ENCODE measurements at regions of chr1 and their contacts with region 1.

Region 1: DNA sequence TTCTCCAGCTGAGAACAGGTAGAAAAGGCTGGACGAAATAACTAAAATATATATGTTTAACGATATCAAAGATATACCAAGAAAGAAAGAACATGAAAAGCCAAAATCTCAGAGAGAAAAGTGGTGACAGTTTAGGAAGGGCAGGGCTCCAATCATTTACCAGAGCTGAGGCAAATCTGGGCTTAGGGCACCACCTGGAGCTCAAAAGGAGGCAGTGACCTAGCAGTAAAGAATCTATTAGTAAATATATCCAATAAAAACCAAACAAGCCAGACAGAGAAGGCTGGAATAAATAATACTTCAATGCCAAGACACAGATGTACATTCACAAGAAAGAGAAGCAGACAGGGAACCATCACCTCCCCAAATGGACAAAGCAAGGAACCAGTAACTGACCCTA is 43.5 kb downstream of the CHIA start:
- DNase-seq: peak; percentile 59
- H3K4me3 Mint-ChIP-seq: no peak overlapping the region
- H3K27ac Mint-ChIP-seq: no peak overlapping the region
- H3K4me1 Mint-ChIP-seq: no peaks in the 10 kb centered on the region
- H3K27me3 Mint-ChIP-seq: no peaks in the 10 kb centered on the region
- CTCF ChIP-seq: peak; percentile 68

Region 2: DNA sequence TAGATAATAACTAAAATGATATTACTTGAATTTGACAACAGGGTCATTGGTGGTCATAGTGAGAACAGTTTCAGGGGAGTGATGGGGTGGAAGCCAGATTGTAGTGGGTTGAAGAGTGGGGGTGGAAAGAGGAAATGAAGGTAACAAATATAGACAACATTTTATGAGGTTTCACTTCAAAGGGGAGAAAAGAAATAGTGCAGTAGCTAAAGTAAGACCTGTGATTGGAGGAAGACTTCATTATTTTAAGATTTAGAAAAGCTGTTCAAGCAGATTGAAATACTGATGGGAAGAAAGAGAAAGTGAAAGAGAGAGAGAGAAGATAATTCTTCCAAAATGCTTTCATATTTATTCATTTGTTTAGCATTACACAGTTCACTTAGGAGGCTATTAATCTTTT is 607.4 kb before region 1 on chr1:
- CTCF ChIA-PET with region 1: no interaction called
- POLR2A ChIA-PET with region 1: no interaction called
- intact Hi-C with region 1: no loop called
- DNase-seq: no peak
- H3K4me3 Mint-ChIP-seq: no peak overlapping the region
- H3K27ac Mint-ChIP-seq: no peak overlapping the region
- H3K4me1 Mint-ChIP-seq: no peaks in the 10 kb centered on the region
- H3K27me3 Mint-ChIP-seq: peaks cover 45% of the 10 kb centered on the region
- CTCF ChIP-seq: no peak

Region 3: GRCh38 chr1:110963691-110964399 is 370.3 kb before region 1 on chr1 and contains the start of gene LRIF1:
- CTCF ChIA-PET with region 1: no interaction called
- POLR2A ChIA-PET with region 1: no interaction called
- intact Hi-C with region 1: no loop called
- DNase-seq: peak; percentile 51
- H3K4me3 Mint-ChIP-seq: peak within 1 kb of the TSS; percentile 70
- H3K27ac Mint-ChIP-seq: peak within 1 kb of the TSS; percentile 44
- H3K4me1 Mint-ChIP-seq: peaks cover 5% of the 10 kb centered on the region
- H3K27me3 Mint-ChIP-seq: no peaks in the 10 kb centered on the region
- CTCF ChIP-seq: no peak
- total RNA-seq, gene LRIF1: 8.5 and 9.5 TPM in 2 replicates

Region 4: DNA sequence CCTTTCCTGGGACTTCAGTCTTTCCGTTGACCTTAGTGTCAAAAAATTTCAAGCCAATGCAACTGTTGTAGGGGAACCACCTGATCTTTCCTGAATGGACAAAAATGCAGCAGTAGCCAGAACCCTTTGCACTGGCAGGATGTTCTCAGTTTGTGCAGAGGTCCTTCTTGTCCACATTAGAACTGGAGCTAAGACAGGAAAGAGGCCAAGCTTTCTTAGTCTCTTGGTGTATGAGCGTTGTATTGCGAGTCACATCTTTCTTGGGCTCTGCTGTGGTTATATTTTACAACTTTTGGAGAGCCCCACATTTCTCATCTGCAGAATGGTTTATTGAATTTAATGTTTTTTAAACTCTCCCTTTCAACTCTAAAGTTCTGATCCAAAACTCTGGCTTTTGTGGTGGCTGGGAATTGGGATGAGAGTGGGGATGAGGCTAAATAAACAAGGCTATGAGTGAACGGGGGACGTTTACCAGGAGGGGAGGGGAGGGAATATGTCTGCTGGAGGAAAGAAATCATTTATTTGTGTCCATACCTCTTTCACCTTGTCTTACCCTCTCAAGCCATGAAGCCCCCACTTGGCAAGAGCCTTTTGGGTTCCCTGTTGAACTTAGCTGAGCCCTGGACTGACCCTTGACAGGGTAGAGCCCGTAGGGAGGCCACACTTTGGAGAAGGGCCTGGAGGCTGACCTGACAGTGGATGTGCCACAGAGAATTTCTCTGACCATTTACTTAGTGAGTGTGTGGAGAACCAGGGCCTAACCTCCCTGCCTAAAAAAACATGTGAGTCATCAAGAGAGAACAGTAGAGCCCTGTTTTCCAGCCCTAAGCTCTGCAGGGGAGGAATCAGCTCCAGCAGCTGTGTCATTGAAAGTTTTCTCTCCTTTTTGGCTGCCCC is 106.1 kb before region 1 on chr1:
- CTCF ChIA-PET with region 1: interaction called, 62 read pairs
- POLR2A ChIA-PET with region 1: interaction called, 8 read pairs
- intact Hi-C with region 1: loop called (anchors 1 kb)
- DNase-seq: peak; percentile 91
- H3K4me3 Mint-ChIP-seq: peak overlapping the region; percentile 52
- H3K27ac Mint-ChIP-seq: peak overlapping the region; percentile 72
- H3K4me1 Mint-ChIP-seq: peaks cover 29% of the 10 kb centered on the region
- H3K27me3 Mint-ChIP-seq: no peaks in the 10 kb centered on the region
- CTCF ChIP-seq: no peak

Region 5: DNA sequence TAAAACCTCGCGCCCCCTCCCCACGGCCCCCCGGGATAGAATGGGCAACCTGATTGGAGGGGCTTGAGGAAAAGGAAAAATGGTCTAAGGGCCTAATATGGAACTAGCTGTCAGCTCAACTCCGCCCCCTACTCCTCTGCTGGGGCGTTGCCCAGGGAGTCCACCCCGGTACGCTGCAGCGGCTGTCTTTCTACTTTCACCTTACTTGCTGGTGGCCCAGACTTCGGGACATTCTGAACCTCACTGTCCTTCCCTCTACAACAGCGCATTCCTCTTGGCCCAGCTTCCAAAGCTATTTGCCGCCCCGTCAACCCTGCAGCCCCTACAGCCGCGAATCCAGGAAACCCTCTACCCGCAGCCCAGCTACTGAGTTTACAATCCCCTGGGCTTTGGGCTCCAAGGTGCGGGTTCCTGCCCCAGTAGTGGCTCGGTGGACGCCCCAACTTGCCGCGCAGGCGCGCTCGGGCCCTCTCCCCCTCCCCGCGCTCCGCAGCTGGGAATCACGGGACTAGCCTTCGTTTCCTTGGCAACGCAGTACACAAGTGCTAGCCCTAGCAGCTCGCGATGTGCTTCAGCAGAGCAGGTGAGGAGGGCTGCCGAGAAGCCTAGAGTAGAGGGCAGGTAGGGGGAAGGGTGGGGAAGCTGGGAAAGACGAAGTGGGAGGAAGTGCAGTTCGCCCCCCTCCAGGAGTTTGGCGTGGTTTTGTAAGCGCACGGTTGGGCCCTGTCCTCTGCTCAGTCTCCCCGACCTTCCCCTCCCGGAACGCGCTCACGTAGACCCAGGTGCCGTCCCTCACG is 12.1 kb after region 1 on chr1:
- CTCF ChIA-PET with region 1: interaction called, 18 read pairs
- POLR2A ChIA-PET with region 1: no interaction called
- intact Hi-C with region 1: no loop called
- DNase-seq: peak; percentile 56
- H3K4me3 Mint-ChIP-seq: peak overlapping the region; percentile 66
- H3K27ac Mint-ChIP-seq: peak overlapping the region; percentile 62
- H3K4me1 Mint-ChIP-seq: peaks cover 8% of the 10 kb centered on the region
- H3K27me3 Mint-ChIP-seq: no peaks in the 10 kb centered on the region
- CTCF ChIP-seq: no peak

Region 6: GRCh38 chr1:111551623-111552411 is 217.6 kb after region 1 on chr1:
- CTCF ChIA-PET with region 1: no interaction called
- POLR2A ChIA-PET with region 1: no interaction called
- intact Hi-C with region 1: no loop called
- DNase-seq: no peak
- H3K4me3 Mint-ChIP-seq: no peak overlapping the region
- H3K27ac Mint-ChIP-seq: no peak overlapping the region
- H3K4me1 Mint-ChIP-seq: peaks cover 7% of the 10 kb centered on the region
- H3K27me3 Mint-ChIP-seq: no peaks in the 10 kb centered on the region
- CTCF ChIP-seq: no peak

Region 7: GRCh38 chr1:111648806-111649205 is 314.6 kb after region 1 on chr1:
- CTCF ChIA-PET with region 1: no interaction called
- POLR2A ChIA-PET with region 1: no interaction called
- intact Hi-C with region 1: no loop called
- DNase-seq: no peak
- H3K4me3 Mint-ChIP-seq: no peak overlapping the region
- H3K27ac Mint-ChIP-seq: no peak overlapping the region
- H3K4me1 Mint-ChIP-seq: peaks cover 6% of the 10 kb centered on the region
- H3K27me3 Mint-ChIP-seq: no peaks in the 10 kb centered on the region
- CTCF ChIP-seq: no peak